ENCODE measurements at regions of chr1 and their contacts with region 1.

Region 1: DNA sequence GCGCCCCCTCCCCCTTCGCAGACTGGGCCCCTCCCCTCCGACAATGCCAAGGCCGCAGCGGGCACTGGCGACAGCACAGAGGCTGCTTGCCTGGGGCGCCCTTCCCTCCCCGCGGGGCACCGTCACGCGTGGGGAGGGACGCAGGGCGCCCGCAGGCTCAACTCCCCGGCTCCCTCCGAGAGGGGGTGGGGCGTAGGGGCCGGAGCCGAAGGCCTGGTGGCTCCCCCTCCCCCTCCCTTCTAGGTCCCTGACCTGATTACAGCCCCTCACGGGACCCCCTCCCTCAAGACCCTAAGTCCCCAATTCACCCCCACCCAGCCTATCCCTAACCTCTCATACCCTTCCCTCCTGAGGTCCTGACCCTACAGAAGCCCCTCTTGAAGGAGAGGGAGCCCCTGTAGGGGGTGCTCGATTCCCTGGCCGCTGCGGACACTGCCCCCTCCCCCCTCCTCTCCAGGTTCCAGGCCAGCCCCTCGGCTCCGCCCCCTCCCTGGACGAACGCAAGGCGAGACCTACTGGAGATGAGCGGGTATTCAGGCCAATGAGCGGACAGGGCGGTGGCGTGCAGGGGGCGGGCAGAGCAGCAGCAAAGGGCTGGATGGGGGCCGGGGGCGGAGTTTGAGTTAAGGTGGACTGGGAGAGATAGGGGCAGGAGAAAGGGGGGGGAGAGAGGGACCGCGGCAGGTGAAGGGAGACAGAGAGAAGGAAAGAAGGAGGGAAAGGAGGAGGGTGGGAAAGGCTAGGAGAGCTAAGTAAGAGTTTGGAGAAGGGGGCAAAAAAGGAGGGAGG is 733 bp upstream of the ZBTB7B start:
- DNase-seq: peak; percentile 97
- ATAC-seq: peak; percentile 70
- H3K4me3 ChIP-seq: peak overlapping the region; percentile 70 to 86 (median 84)
- H3K27ac ChIP-seq: peak overlapping the region; percentile 97
- H3K4me1 ChIP-seq: peaks cover 43% of the 10 kb centered on the region
- H3K27me3 ChIP-seq: no peaks in the 10 kb centered on the region; a peak in 1 of 5 replicates
- CTCF ChIP-seq: peak; percentile 71
- EP300 ChIP-seq: peak in 1 of 2 experiments; percentile 7; a peak in 1 of 4 replicates
- POLR2A ChIP-seq: no peak
- RAD21 ChIP-seq: no peak

Region 2: GRCh38 chr1:154598871-154599635 is 402.8 kb before region 1 on chr1:
- CTCF ChIA-PET with region 1: no interaction called
- POLR2A ChIA-PET with region 1: no interaction called
- in situ Hi-C with region 1: no loop called
- intact Hi-C with region 1: no loop called
- DNase-seq: no peak
- ATAC-seq: no peak
- H3K4me3 ChIP-seq: no peak overlapping the region
- H3K27ac ChIP-seq: no peak overlapping the region
- H3K4me1 ChIP-seq: 0 out of 2 replicates have a peak, but pooled peaks cover under 1% of the 10 kb centered on the region
- H3K27me3 ChIP-seq: no peaks in the 10 kb centered on the region
- CTCF ChIP-seq: no peak
- EP300 ChIP-seq: no peak
- POLR2A ChIP-seq: no peak
- RAD21 ChIP-seq: no peak

Region 3: GRCh38 chr1:154736841-154737240 is 265.0 kb before region 1 on chr1:
- CTCF ChIA-PET with region 1: no interaction called
- POLR2A ChIA-PET with region 1: no interaction called
- in situ Hi-C with region 1: no loop called
- intact Hi-C with region 1: no loop called
- DNase-seq: no peak
- ATAC-seq: no peak
- H3K4me3 ChIP-seq: no peak overlapping the region
- H3K27ac ChIP-seq: no peak overlapping the region
- H3K4me1 ChIP-seq: 0 out of 2 replicates have a peak, but pooled peaks cover 8% of the 10 kb centered on the region
- H3K27me3 ChIP-seq: peaks cover 8 to 19% of the 10 kb centered on the region in 2 experiments; a peak in 4 of 5 replicates
- CTCF ChIP-seq: no peak
- EP300 ChIP-seq: no peak
- POLR2A ChIP-seq: no peak
- RAD21 ChIP-seq: no peak

Region 4: GRCh38 chr1:154906621-154907081 is 95.2 kb before region 1 on chr1:
- CTCF ChIA-PET with region 1: interaction called, 11 read pairs
- POLR2A ChIA-PET with region 1: no interaction called
- in situ Hi-C with region 1: no loop called
- intact Hi-C with region 1: no loop called
- DNase-seq: peak; percentile 52
- ATAC-seq: peak; percentile 88
- H3K4me3 ChIP-seq: no peak overlapping the region
- H3K27ac ChIP-seq: no peak overlapping the region
- H3K4me1 ChIP-seq: peaks cover 20% of the 10 kb centered on the region
- H3K27me3 ChIP-seq: no peaks in the 10 kb centered on the region
- CTCF ChIP-seq: peak; percentile 94
- EP300 ChIP-seq: no peak
- POLR2A ChIP-seq: no peak
- RAD21 ChIP-seq: peak; percentile 86

Region 5: GRCh38 chr1:154961497-154962262 is 40.2 kb before region 1 on chr1 and contains the start of gene PYGO2:
- CTCF ChIA-PET with region 1: no interaction called
- POLR2A ChIA-PET with region 1: interaction called, 8 read pairs
- in situ Hi-C with region 1: loop called (anchors 5 kb)
- intact Hi-C with region 1: loop called (anchors 2 kb)
- DNase-seq: peak; percentile 48
- ATAC-seq: peak; percentile 87
- H3K4me3 ChIP-seq: peak within 1 kb of the TSS; percentile 72 to 87 (median 80)
- H3K27ac ChIP-seq: peak within 1 kb of the TSS; percentile 96
- H3K4me1 ChIP-seq: peaks cover 48% of the 10 kb centered on the region
- H3K27me3 ChIP-seq: no peaks in the 10 kb centered on the region; a peak in 1 of 5 replicates
- CTCF ChIP-seq: peak; percentile 75
- EP300 ChIP-seq: 0 out of 4 replicates have a peak, but pooled peaks of 1 of the 2 experiments have one; percentile 3
- POLR2A ChIP-seq: peak; percentile 72 to 84
- RAD21 ChIP-seq: peak; percentile 95
- total RNA-seq, gene PYGO2: 20.3 and 21.3 TPM in 2 replicates

Region 6: DNA sequence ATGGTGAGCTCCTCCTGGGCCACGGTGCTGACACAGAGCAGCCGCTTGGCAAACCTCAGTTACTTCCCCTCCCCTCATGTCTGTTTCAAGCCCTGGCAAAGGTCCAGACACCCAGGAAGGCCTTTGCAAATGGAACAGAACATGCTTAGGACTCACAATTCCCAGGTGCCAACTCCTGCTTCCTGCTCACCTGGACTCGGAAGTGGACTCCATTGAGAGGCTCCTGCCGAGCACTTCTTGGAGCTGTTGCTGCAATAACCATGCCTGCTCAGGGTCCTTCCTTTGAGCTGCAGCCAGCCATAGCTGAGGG is 21.0 kb after region 1 on chr1:
- CTCF ChIA-PET with region 1: interaction called, 54 read pairs
- POLR2A ChIA-PET with region 1: interaction called, 90 read pairs
- in situ Hi-C with region 1: no loop called
- intact Hi-C with region 1: no loop called
- DNase-seq: no peak
- ATAC-seq: peak; percentile 58
- H3K4me3 ChIP-seq: peak overlapping the region in 1 of 3 experiments; percentile 30; a peak in 1 of 6 replicates
- H3K27ac ChIP-seq: no peak overlapping the region
- H3K4me1 ChIP-seq: peaks cover 64% of the 10 kb centered on the region
- H3K27me3 ChIP-seq: no peaks in the 10 kb centered on the region
- CTCF ChIP-seq: no peak
- EP300 ChIP-seq: no peak
- POLR2A ChIP-seq: no peak
- RAD21 ChIP-seq: no peak

Region 7: GRCh38 chr1:155063550-155064110 is 61.8 kb after region 1 on chr1 and contains the start of gene EFNA4:
- CTCF ChIA-PET with region 1: no interaction called
- POLR2A ChIA-PET with region 1: interaction called, 3 read pairs
- in situ Hi-C with region 1: no loop called
- intact Hi-C with region 1: loop called (anchors 5 kb)
- DNase-seq: peak; percentile 82
- ATAC-seq: peak; percentile 84
- H3K4me3 ChIP-seq: peak within 1 kb of the TSS; percentile 72 to 91 (median 83)
- H3K27ac ChIP-seq: peak within 1 kb of the TSS; percentile 92
- H3K4me1 ChIP-seq: peaks cover 32% of the 10 kb centered on the region
- H3K27me3 ChIP-seq: no peaks in the 10 kb centered on the region
- CTCF ChIP-seq: no peak; the same call in 1 of the 2 replicates
- EP300 ChIP-seq: no peak
- POLR2A ChIP-seq: peak; percentile 81 to 95
- RAD21 ChIP-seq: no peak
- total RNA-seq, gene EFNA4: 9.3 and 17.2 TPM in 2 replicates